Activated B cell treated with CpG ODN at 0.5 μM for 24 hours (primary cell): ENCODE measurements at regions of chr11 and their contacts with region 1.

Region 1: DNA sequence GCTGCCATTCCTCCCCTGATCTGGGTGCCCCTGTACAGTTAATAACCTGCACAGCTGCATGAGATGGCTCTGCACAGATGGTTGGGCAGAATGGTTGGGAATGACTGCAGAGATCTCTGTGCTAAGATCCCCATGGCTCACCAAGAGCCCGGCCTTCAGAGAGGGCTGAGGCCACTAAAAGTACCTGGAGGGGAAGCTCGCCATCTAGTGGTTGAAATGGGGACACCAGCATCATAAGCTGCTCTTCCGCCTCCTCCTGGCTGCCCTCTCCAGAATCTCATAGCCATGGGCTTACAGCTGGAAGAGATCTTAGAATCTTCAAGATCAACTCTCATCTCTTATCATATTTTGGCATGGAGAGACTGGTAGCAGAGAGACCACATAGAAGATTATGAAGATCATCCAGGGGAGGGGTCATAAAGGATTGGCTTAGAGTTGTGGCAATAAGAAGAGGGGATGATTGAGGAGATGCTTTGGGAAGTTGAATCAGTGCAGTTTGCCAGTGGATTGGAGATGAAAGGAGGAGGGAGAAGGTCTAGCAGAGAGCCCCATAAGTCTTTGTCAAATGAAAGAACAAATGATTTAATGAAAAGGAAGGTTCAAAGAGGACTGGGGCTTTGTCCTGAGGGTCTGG is 22.0 kb upstream of the TLCD5 start:
- DNase-seq: peak; percentile 32
- ATAC-seq: peak; percentile 77
- H3K4me3 Mint-ChIP-seq: no peak overlapping the region
- H3K27ac Mint-ChIP-seq: no peak overlapping the region
- H3K4me1 Mint-ChIP-seq: no peaks in the 10 kb centered on the region
- H3K27me3 Mint-ChIP-seq: peaks cover 20% of the 10 kb centered on the region
- CTCF ChIP-seq: peak; percentile 76

Region 2: GRCh38 chr11:119481021-119481666 is 822.0 kb before region 1 on chr11:
- CTCF ChIA-PET with region 1: no interaction called
- POLR2A ChIA-PET with region 1: no interaction called
- intact Hi-C with region 1: loop called (anchors 1 kb)
- DNase-seq: peak; percentile 70
- ATAC-seq: peak; percentile 79
- H3K4me3 Mint-ChIP-seq: no peak overlapping the region
- H3K27ac Mint-ChIP-seq: no peak overlapping the region
- H3K4me1 Mint-ChIP-seq: peaks cover 5% of the 10 kb centered on the region
- H3K27me3 Mint-ChIP-seq: peaks cover 40% of the 10 kb centered on the region
- CTCF ChIP-seq: no peak

Region 3: GRCh38 chr11:120172054-120172911 is 130.8 kb before region 1 on chr11:
- CTCF ChIA-PET with region 1: interaction called, 6 read pairs
- POLR2A ChIA-PET with region 1: no interaction called
- intact Hi-C with region 1: loop called (anchors 1 kb)
- DNase-seq: peak; percentile 10
- ATAC-seq: peak; percentile 54
- H3K4me3 Mint-ChIP-seq: no peak overlapping the region
- H3K27ac Mint-ChIP-seq: no peak overlapping the region
- H3K4me1 Mint-ChIP-seq: peaks cover 12% of the 10 kb centered on the region
- H3K27me3 Mint-ChIP-seq: peaks cover 61% of the 10 kb centered on the region
- CTCF ChIP-seq: no peak

Region 4: GRCh38 chr11:120235024-120235861 is 67.9 kb before region 1 on chr11:
- CTCF ChIA-PET with region 1: interaction called, 35 read pairs
- POLR2A ChIA-PET with region 1: no interaction called
- intact Hi-C with region 1: loop called (anchors 1 kb)
- DNase-seq: peak; percentile 34
- ATAC-seq: peak; percentile 40
- H3K4me3 Mint-ChIP-seq: no peak overlapping the region
- H3K27ac Mint-ChIP-seq: no peak overlapping the region
- H3K4me1 Mint-ChIP-seq: peaks cover under 1% of the 10 kb centered on the region
- H3K27me3 Mint-ChIP-seq: peaks cover 35% of the 10 kb centered on the region
- CTCF ChIP-seq: no peak

Region 5: DNA sequence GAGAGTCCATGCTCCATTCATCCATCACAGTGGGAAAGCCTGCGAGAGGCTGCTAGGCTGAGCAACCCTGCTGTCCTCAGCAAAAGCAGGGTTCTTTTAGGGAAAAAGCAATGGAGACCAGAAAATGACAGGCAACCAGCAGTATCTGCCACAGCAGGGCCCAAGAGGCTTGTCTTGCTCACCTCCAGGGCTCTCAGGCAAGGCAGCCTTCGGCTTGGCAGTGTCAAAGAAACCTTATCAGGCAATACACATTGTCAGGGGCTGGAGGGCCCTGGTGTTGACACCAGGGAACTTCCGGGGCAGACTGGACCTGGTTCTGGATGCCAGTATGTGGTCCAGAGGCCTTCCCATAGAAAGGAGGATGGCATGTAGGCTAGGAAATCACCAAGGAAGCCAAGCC is 11.7 kb after region 1 on chr11:
- CTCF ChIA-PET with region 1: interaction called, 23 read pairs
- POLR2A ChIA-PET with region 1: no interaction called
- intact Hi-C with region 1: no loop called
- DNase-seq: no peak
- ATAC-seq: no peak
- H3K4me3 Mint-ChIP-seq: no peak overlapping the region
- H3K27ac Mint-ChIP-seq: no peak overlapping the region
- H3K4me1 Mint-ChIP-seq: no peaks in the 10 kb centered on the region
- H3K27me3 Mint-ChIP-seq: peaks cover 20% of the 10 kb centered on the region
- CTCF ChIP-seq: no peak